ENCODE measurements at regions of chr9 and their contacts with region 1.

Region 1: GRCh38 chr9:92133949-92134604 is 18.9 kb upstream of the SPTLC1 start:
- DNase-seq: peak; percentile 68 to 87 (median 78)
- ATAC-seq: peak; percentile 41 to 79 (median 74)
- H3K4me3 ChIP-seq: peak overlapping the region in 5 of 12 donors; percentile 4 to 18 (median 13)
- H3K27ac ChIP-seq: no peak overlapping the region
- H3K4me1 ChIP-seq: peaks cover 0 to 11% (median 0%) of the 10 kb centered on the region in 12 donors
- H3K27me3 ChIP-seq: peaks cover 0 to 10% (median 0%) of the 10 kb centered on the region in 9 donors
- CTCF ChIP-seq: peak; percentile 87 to 98 (median 93)
- POLR2A ChIP-seq: no peak

Region 2: DNA sequence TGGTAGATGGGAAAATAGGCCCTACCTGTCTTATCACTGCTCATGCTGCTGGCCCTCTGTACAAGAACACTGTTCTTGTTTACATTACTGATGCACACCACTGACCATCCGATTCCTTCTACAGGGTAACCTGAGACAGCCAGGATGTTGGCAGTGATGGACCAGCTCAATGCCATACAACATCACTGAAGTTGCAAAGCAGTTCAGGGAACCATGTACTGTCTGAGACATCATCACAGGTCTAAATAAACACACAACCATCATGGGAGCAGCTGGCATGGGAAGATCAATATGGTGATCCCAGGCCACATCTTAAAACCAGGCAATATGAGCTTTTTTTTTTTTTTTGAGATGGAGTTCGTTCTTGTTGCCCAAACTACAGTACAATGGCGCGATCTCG is 100.4 kb after region 1 on chr9:
- intact Hi-C with region 1: loop called in 2 of 10 experiments (anchors 10 kb)
- DNase-seq: no peak
- ATAC-seq: no peak
- H3K4me3 ChIP-seq: no peak overlapping the region
- H3K27ac ChIP-seq: no peak overlapping the region
- H3K4me1 ChIP-seq: no peaks in the 10 kb centered on the region
- H3K27me3 ChIP-seq: no peaks in the 10 kb centered on the region
- CTCF ChIP-seq: no peak
- POLR2A ChIP-seq: no peak

Region 3: DNA sequence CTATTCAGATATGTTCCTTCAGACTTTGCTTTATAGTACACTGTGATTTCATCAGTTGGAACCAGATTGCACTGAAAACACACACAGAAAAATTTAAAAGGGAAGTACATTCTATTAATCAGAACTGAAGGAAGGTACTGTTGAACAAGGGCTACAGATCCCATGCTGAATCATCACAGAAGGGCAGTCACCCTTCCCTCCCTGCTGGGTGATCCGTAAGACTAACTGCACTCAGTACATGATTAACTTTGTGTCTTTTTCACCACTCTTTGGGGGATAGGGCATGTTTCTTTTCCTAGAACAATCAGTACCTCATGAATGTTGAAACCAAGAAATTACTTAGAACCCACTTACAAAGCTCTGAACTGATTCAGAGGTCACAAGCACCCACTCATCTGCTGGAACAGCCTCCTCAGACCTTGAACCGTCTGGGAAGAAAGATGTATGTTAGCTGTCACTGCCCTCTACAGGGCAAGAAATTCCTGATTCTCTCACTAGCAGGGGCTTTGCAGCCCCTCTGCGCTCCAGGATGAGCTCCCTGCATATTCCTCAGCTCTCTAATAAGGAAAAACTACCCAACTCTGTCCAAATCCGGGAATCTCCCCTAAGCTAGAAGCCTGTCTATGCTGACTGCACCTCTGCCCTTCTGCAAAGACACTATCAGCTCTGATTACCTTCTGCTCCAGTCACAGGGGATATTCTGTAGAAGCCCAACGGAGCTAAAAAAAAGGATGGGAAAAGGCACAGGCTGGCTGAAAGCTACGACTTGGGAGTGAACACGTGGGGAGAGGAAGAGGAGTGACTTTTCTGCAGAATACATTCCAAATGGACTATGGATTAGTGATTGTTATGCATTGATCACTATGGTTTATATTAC is 108.4 kb after region 1 on chr9:
- intact Hi-C with region 1: loop called in 4 of 10 experiments (anchors 10 kb)
- DNase-seq: no peak
- ATAC-seq: no peak
- H3K4me3 ChIP-seq: no peak overlapping the region
- H3K27ac ChIP-seq: no peak overlapping the region
- H3K4me1 ChIP-seq: no peaks in the 10 kb centered on the region
- H3K27me3 ChIP-seq: no peaks in the 10 kb centered on the region
- CTCF ChIP-seq: peak in 6 of 12 donors; percentile 26 to 44 (median 31)
- POLR2A ChIP-seq: no peak

Region 4: DNA sequence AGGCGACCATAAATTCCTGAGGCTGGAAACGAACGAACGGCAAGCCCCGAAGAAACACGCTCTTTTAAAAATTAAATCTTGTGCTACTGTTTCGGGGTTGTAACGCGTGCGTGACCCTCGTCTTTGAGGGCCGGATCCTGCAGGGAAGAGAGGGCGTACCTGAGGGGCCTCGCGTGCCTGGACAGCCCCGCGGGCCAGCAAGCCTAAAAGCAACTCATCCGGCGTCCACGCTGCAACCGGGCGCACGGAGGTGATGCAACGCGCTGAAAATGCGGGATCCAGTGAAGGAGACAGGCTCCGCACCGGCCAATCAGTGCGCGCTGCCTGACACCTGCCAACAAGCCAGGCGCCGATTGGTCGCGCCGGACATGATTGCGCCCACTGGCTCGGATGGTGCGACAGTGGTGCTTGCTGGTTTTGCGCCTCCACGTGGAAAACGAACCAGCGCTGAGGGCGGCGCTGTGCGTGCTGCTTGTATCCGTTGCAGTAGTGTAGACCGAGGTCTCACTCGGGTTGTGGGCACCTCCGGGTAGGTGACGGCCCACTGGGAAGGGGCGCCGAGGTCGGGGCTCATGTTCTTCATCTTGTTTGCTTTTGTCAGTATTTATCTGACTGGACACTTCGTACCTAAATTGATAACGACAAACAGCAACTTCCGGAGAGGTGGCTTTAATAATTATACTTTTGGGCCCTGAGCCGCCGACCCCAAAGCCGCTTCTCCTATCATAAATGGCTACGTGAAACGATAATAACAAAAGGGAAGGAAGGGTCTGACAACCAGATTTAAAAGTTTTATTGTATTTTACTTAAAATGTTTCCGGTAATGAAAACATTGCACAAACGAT is 159.6 kb after region 1 on chr9 and contains the start of gene IARS1:
- intact Hi-C with region 1: loop called in 4 of 10 experiments (anchors 2 to 10 kb)
- DNase-seq: peak; percentile 98 to 99 (median 98)
- ATAC-seq: peak; percentile 99 to 100 (median 100)
- H3K4me3 ChIP-seq: peak within 1 kb of the TSS; percentile 41 to 91 (median 72)
- H3K27ac ChIP-seq: peak within 1 kb of the TSS in 11 of 12 donors; percentile 51 to 85 (median 71)
- H3K4me1 ChIP-seq: peaks cover 0 to 34% (median 22%) of the 10 kb centered on the region in 12 donors
- H3K27me3 ChIP-seq: no peaks in the 10 kb centered on the region
- CTCF ChIP-seq: peak in 11 of 12 donors; percentile 6 to 65 (median 36)
- POLR2A ChIP-seq: peak in 1 of 2 donors; percentile 77
- total RNA-seq, gene IARS1: 44.2 to 85.3 (median 68.1) TPM

Measured in heart left ventricle (tissue), 16 donors.